B cell (primary cell): ENCODE measurements at regions of chr11 and their contacts with region 1.

Region 1: GRCh38 chr11:60913793-60914632 is at the start of gene TMEM109:
- DNase-seq: peak; percentile 95
- ATAC-seq: peak; percentile 56
- H3K4me3 ChIP-seq: peak within 1 kb of the TSS; percentile 61 to 100 (median 90)
- H3K4me3 Mint-ChIP-seq: peak within 1 kb of the TSS; percentile 97
- H3K27ac ChIP-seq: peak within 1 kb of the TSS; percentile 87 to 96
- H3K27ac Mint-ChIP-seq: peak within 1 kb of the TSS; percentile 98
- H3K4me1 ChIP-seq: peaks cover 68 to 87% of the 10 kb centered on the region in 2 donors
- H3K4me1 Mint-ChIP-seq: peaks cover 77% of the 10 kb centered on the region
- H3K27me3 ChIP-seq: no peaks in the 10 kb centered on the region
- H3K27me3 Mint-ChIP-seq: no peaks in the 10 kb centered on the region
- CTCF ChIP-seq: no peak
- total RNA-seq, gene TMEM109: 81.7 and 99.4 TPM in 2 replicates

Region 2: GRCh38 chr11:60455531-60456042 is 458.4 kb before region 1 on chr11 and contains the start of gene MS4A1:
- CTCF ChIA-PET with region 1: no interaction called
- POLR2A ChIA-PET with region 1: no interaction called
- intact Hi-C with region 1: loop called (anchors 5 kb)
- DNase-seq: peak; percentile 95
- ATAC-seq: peak; percentile 83
- H3K4me3 ChIP-seq: peak within 1 kb of the TSS; percentile 63 to 96 (median 74)
- H3K4me3 Mint-ChIP-seq: peak within 1 kb of the TSS; percentile 90
- H3K27ac ChIP-seq: peak within 1 kb of the TSS; percentile 93 to 98
- H3K27ac Mint-ChIP-seq: peak within 1 kb of the TSS; percentile 99
- H3K4me1 ChIP-seq: peaks cover 44% of the 10 kb centered on the region in 2 donors
- H3K4me1 Mint-ChIP-seq: peaks cover 65% of the 10 kb centered on the region
- H3K27me3 ChIP-seq: no peaks in the 10 kb centered on the region
- H3K27me3 Mint-ChIP-seq: no peaks in the 10 kb centered on the region
- CTCF ChIP-seq: no peak
- total RNA-seq, gene MS4A1: 1,202 and 1,215 TPM in 2 replicates

Region 3: GRCh38 chr11:60924110-60924905 is 10.3 kb after region 1 on chr11 and contains the start of gene TMEM132A:
- CTCF ChIA-PET with region 1: interaction called, 26 read pairs
- POLR2A ChIA-PET with region 1: interaction called, 96 read pairs
- intact Hi-C with region 1: no loop called
- DNase-seq: peak; percentile 43
- ATAC-seq: peak; percentile 37
- H3K4me3 ChIP-seq: peak within 1 kb of the TSS in 4 of 5 experiments; percentile 40 to 69 (median 56)
- H3K4me3 Mint-ChIP-seq: peak within 1 kb of the TSS; percentile 82
- H3K27ac ChIP-seq: no peak within 1 kb of the TSS
- H3K27ac Mint-ChIP-seq: no peak within 1 kb of the TSS
- H3K4me1 ChIP-seq: peaks cover 32 to 37% of the 10 kb centered on the region in 2 donors
- H3K4me1 Mint-ChIP-seq: peaks cover 33% of the 10 kb centered on the region
- H3K27me3 ChIP-seq: peaks cover 0 to 30% (median 7%) of the 10 kb centered on the region in 4 experiments
- H3K27me3 Mint-ChIP-seq: peaks cover 7% of the 10 kb centered on the region
- CTCF ChIP-seq: no peak
- total RNA-seq, gene TMEM132A: 11.3 and 13.8 TPM in 2 replicates

Region 4: GRCh38 chr11:60951899-60952741 is 38.1 kb after region 1 on chr11 and contains the start of gene SLC15A3:
- CTCF ChIA-PET with region 1: interaction called, 14 read pairs
- POLR2A ChIA-PET with region 1: interaction called, 26 read pairs
- intact Hi-C with region 1: loop called (anchors 1 kb)
- DNase-seq: peak; percentile 91
- ATAC-seq: peak; percentile 88
- H3K4me3 ChIP-seq: peak within 1 kb of the TSS; percentile 53 to 99 (median 81)
- H3K4me3 Mint-ChIP-seq: peak within 1 kb of the TSS; percentile 90
- H3K27ac ChIP-seq: peak within 1 kb of the TSS; percentile 91 to 98
- H3K27ac Mint-ChIP-seq: peak within 1 kb of the TSS; percentile 94
- H3K4me1 ChIP-seq: peaks cover 48 to 62% of the 10 kb centered on the region in 2 donors
- H3K4me1 Mint-ChIP-seq: peaks cover 55% of the 10 kb centered on the region
- H3K27me3 ChIP-seq: no peaks in the 10 kb centered on the region
- H3K27me3 Mint-ChIP-seq: no peaks in the 10 kb centered on the region
- CTCF ChIP-seq: no peak
- total RNA-seq, gene SLC15A3: 91.4 and 93.0 TPM in 2 replicates

Region 5: DNA sequence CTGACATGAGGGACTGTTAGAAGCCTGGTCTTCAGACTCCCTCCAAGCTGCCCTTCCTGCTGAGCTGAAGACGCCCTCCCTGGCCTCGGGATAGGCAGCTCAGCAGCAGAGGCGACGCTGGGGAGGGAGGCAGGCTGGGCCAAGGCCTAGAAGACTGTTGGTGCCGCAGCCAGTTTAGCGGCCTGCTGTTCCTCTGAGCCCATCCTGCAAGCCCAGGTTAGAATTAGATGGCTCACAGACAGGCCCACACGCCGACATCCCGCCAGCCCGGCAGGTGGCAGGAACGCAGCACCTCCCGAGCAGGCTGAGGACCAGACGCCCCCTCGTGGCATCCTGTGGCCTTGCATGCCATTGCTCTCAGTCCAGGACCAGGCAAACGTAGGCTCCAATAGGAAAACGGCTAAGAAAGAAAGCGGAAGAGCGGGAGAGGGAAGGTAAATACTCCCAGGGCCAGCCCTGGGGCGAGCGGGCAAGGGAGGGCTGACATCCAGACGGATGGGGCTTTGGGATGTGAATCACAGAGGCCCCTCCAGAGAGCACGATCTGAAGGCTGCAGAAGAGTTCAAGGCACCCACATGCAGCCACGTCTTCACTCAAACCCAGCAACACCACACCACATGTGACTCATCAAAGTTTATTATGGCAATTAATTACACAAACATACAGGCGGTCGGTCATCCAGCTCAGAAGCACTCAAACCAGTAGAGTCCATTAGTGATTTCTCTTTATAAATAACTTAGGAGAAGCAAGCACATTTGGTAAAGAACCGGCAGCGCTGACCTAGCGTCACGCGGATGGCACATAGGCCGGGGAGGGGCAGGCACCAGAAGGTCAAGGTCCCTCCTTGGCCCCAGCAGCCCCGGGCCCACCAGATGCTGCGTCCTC is 215.9 kb after region 1 on chr11:
- CTCF ChIA-PET with region 1: interaction called, 16 read pairs
- POLR2A ChIA-PET with region 1: interaction called, 7 read pairs
- intact Hi-C with region 1: loop called (anchors 1 kb)
- DNase-seq: peak; percentile 90
- ATAC-seq: peak; percentile 100
- H3K4me3 ChIP-seq: no peak overlapping the region
- H3K4me3 Mint-ChIP-seq: no peak overlapping the region
- H3K27ac ChIP-seq: no peak overlapping the region
- H3K27ac Mint-ChIP-seq: no peak overlapping the region
- H3K4me1 ChIP-seq: peaks cover 9% of the 10 kb centered on the region in 2 donors
- H3K4me1 Mint-ChIP-seq: peaks cover 4% of the 10 kb centered on the region
- H3K27me3 ChIP-seq: no peaks in the 10 kb centered on the region
- H3K27me3 Mint-ChIP-seq: no peaks in the 10 kb centered on the region
- CTCF ChIP-seq: peak; percentile 100

Region 6: DNA sequence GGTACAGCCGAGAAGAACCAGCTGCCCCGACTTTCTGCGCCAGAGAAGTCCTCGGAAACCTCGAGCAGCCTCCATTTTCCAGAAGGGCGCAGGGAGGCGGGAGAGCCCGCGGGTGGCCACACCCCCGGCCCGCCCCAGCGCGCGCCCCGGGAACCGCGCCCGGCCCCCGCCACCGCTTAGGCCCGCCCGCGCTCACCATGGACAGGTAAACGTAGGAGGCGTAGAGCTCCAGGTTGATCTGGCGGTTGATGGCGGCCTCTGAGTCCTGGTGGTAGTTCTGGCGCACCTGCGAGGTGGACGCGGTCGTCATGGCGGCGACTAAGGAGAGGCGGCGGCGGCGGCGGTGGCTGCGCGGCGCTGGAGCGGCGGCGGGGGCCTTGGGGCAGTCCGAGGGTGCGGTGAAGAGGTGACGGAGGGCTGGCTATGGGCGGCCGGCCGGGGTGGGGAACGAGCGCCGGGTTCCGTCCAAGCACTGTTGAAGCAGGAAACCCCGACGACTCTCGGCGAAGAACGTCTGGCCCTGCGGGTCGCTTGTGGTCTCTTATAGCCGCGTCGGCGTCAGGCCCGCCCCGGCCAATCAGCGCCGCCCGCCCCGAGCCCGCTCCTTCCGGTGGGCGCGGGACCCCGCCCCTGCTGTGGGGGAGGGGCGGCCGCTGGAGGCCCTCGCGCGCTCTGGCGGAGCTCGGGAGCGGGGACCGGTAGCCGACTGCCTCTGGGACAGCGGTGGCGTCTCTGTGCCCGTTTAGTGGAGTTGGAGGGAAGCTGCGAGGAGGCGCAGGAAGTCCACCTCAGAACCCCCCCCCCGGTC is 1053.3 kb after region 1 on chr11 and contains the start of gene FTH1:
- CTCF ChIA-PET with region 1: no interaction called
- POLR2A ChIA-PET with region 1: no interaction called
- intact Hi-C with region 1: loop called (anchors 5 kb)
- DNase-seq: peak; percentile 95
- ATAC-seq: peak; percentile 67
- H3K4me3 ChIP-seq: peak within 1 kb of the TSS; percentile 88 to 99 (median 96)
- H3K4me3 Mint-ChIP-seq: peak within 1 kb of the TSS; percentile 97
- H3K27ac ChIP-seq: peak within 1 kb of the TSS; percentile 86 to 94
- H3K27ac Mint-ChIP-seq: peak within 1 kb of the TSS; percentile 99
- H3K4me1 ChIP-seq: peaks cover 58 to 67% of the 10 kb centered on the region in 2 donors
- H3K4me1 Mint-ChIP-seq: peaks cover 72% of the 10 kb centered on the region
- H3K27me3 ChIP-seq: no peaks in the 10 kb centered on the region
- H3K27me3 Mint-ChIP-seq: no peaks in the 10 kb centered on the region
- CTCF ChIP-seq: no peak
- total RNA-seq, gene FTH1: 1,265 and 1,314 TPM in 2 replicates